CD4-positive, alpha-beta T cell (primary cell): ENCODE measurements at regions of chr5 and their contacts with region 1.

Region 1: GRCh38 chr5:151239237-151239861 is 13.6 kb upstream of the GM2A start:
- DNase-seq: peak in 10 of 14 experiments; percentile 25 to 76 (median 55)
- ATAC-seq: peak; percentile 83
- H3K4me3 ChIP-seq: no peak overlapping the region
- H3K4me3 Mint-ChIP-seq: no peak overlapping the region
- H3K27ac ChIP-seq: no peak overlapping the region
- H3K27ac Mint-ChIP-seq: no peak overlapping the region
- H3K4me1 ChIP-seq: peaks cover 36% of the 10 kb centered on the region
- H3K4me1 Mint-ChIP-seq: peaks cover 29% of the 10 kb centered on the region
- H3K27me3 ChIP-seq: no peaks in the 10 kb centered on the region
- H3K27me3 Mint-ChIP-seq: no peaks in the 10 kb centered on the region
- CTCF ChIP-seq: peak; percentile 99

Region 2: GRCh38 chr5:151051066-151051930 is 188.1 kb before region 1 on chr5:
- CTCF ChIA-PET with region 1: no interaction called
- POLR2A ChIA-PET with region 1: no interaction called
- intact Hi-C with region 1: loop called in 1 of 2 experiments (anchors 5 kb)
- DNase-seq: peak; percentile 58 to 85 (median 65)
- ATAC-seq: peak; percentile 77
- H3K4me3 ChIP-seq: no peak overlapping the region
- H3K4me3 Mint-ChIP-seq: no peak overlapping the region
- H3K27ac ChIP-seq: no peak overlapping the region
- H3K27ac Mint-ChIP-seq: peak overlapping the region; percentile 41
- H3K4me1 ChIP-seq: peaks cover 7% of the 10 kb centered on the region
- H3K4me1 Mint-ChIP-seq: peaks cover 12% of the 10 kb centered on the region
- H3K27me3 ChIP-seq: no peaks in the 10 kb centered on the region
- H3K27me3 Mint-ChIP-seq: no peaks in the 10 kb centered on the region
- CTCF ChIP-seq: peak; percentile 74

Region 3: DNA sequence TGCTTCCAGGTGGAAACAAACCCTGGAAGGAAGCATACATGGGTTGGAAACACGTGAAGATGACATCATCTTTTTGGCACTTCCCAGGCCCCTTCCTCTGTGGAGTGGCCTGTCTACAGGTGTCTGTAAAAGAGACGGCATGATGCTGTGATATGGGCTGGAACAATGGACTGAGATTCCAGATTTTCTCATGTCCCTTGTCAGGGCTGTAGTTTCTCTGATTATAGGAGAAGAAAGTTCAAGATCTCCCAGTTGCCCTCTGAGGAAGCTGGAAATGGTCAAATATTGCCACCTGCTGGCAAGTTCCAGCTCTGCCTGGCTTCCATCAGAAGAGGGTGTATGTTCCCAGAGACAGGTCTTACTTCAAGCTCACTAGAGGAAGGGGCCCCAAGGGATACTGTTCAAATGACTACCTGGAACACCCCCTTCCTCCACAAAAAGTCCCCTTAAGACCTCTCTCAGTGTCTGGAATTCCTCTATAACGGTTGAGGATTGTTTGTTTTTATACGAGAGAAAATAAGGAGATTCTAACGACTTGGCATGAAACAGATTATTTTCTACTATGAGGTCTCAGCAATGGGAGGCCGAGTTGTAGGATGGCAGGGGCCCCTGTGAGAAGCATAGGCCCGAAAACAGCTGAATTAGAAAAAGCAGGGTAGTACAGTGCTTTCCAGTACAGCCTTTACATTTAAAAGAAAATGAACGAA is 74.5 kb before region 1 on chr5:
- CTCF ChIA-PET with region 1: interaction called, 22 read pairs
- POLR2A ChIA-PET with region 1: no interaction called
- intact Hi-C with region 1: loop called (anchors 2 kb)
- DNase-seq: peak; percentile 68 to 91 (median 78)
- ATAC-seq: peak; percentile 99
- H3K4me3 ChIP-seq: no peak overlapping the region
- H3K4me3 Mint-ChIP-seq: peak overlapping the region; percentile 3
- H3K27ac ChIP-seq: no peak overlapping the region
- H3K27ac Mint-ChIP-seq: peak overlapping the region; percentile 3
- H3K4me1 ChIP-seq: peaks cover 12% of the 10 kb centered on the region
- H3K4me1 Mint-ChIP-seq: peaks cover 36% of the 10 kb centered on the region
- H3K27me3 ChIP-seq: no peaks in the 10 kb centered on the region
- H3K27me3 Mint-ChIP-seq: no peaks in the 10 kb centered on the region
- CTCF ChIP-seq: peak; percentile 93

Region 4: DNA sequence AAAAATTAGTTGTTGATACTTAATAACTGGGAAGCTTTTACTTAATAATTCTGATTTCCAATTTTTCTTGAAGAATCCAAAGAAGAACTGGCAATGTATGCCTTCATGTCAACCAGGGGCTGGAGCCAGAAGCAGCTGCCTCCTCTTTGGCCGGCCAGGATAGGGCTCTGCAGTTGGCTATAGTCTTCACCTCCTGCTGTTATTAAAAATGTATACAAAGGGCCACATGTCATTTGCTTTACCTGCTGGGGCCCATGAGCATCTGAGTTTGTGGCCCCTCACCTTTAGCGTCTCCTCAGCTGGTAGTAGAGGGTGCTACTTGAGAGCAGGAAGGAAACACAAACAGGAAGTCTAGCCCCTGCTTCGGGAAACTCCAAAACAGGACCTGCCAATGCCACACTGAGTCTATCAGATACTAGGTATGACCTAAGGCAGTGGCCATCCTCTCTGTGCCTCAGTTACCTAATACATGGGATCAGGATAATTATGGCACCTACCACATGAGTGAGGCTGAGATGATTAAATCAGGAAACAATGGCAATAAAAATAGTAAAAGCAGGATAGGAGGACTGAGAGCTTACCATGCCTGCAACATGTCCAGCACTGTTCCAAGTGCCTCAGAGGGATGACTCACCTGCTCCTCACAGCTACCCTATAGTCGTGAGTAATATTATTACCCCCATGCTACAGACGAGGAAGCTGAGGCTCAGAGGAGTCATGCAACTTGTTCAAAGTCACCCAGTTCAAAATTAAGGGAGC is 36.8 kb before region 1 on chr5:
- CTCF ChIA-PET with region 1: interaction called, 13 read pairs
- POLR2A ChIA-PET with region 1: interaction called, 3 read pairs
- intact Hi-C with region 1: loop called in 1 of 2 experiments (anchors 5 kb)
- DNase-seq: peak in 6 of 14 experiments; percentile 4 to 76 (median 58)
- ATAC-seq: peak; percentile 74
- H3K4me3 ChIP-seq: no peak overlapping the region
- H3K4me3 Mint-ChIP-seq: peak overlapping the region; percentile 68
- H3K27ac ChIP-seq: peak overlapping the region; percentile 38 to 49
- H3K27ac Mint-ChIP-seq: peak overlapping the region; percentile 90
- H3K4me1 ChIP-seq: peaks cover 41% of the 10 kb centered on the region
- H3K4me1 Mint-ChIP-seq: peaks cover 56% of the 10 kb centered on the region
- H3K27me3 ChIP-seq: no peaks in the 10 kb centered on the region
- H3K27me3 Mint-ChIP-seq: no peaks in the 10 kb centered on the region
- CTCF ChIP-seq: no peak

Region 5: GRCh38 chr5:151223469-151224264 is 15.7 kb before region 1 on chr5 and contains the start of gene CCDC69:
- CTCF ChIA-PET with region 1: interaction called, 14 read pairs
- POLR2A ChIA-PET with region 1: interaction called, 43 read pairs
- intact Hi-C with region 1: loop called in 1 of 2 experiments (anchors 2 kb)
- DNase-seq: peak in 12 of 14 experiments; percentile 16 to 73 (median 50)
- ATAC-seq: peak; percentile 40
- H3K4me3 ChIP-seq: peak within 1 kb of the TSS; percentile 98
- H3K4me3 Mint-ChIP-seq: peak within 1 kb of the TSS; percentile 92
- H3K27ac ChIP-seq: peak within 1 kb of the TSS; percentile 92 to 94
- H3K27ac Mint-ChIP-seq: peak within 1 kb of the TSS; percentile 94
- H3K4me1 ChIP-seq: peaks cover 64% of the 10 kb centered on the region
- H3K4me1 Mint-ChIP-seq: peaks cover 63% of the 10 kb centered on the region
- H3K27me3 ChIP-seq: no peaks in the 10 kb centered on the region
- H3K27me3 Mint-ChIP-seq: no peaks in the 10 kb centered on the region
- CTCF ChIP-seq: no peak
- total RNA-seq, gene CCDC69: 68.0 to 68.9 TPM